MCF 10A (cell line): ENCODE measurements at regions of chr19 and their contacts with region 1.

Region 1: GRCh38 chr19:36214386-36215275 is at the starts of genes ZNF146 and ZNF565:
- DNase-seq: peak; percentile 99
- H3K4me3 Mint-ChIP-seq: no peak within 1 kb of the TSS
- H3K27ac Mint-ChIP-seq: no peak within 1 kb of the TSS
- H3K4me1 Mint-ChIP-seq: peaks cover 6% of the 10 kb centered on the region
- H3K27me3 Mint-ChIP-seq: no peaks in the 10 kb centered on the region
- CTCF ChIP-seq: no peak
- total RNA-seq, gene ZNF146: 102 and 132 TPM in 2 replicates
- total RNA-seq, gene ZNF565: 2.9 and 3.6 TPM in 2 replicates

Region 2: DNA sequence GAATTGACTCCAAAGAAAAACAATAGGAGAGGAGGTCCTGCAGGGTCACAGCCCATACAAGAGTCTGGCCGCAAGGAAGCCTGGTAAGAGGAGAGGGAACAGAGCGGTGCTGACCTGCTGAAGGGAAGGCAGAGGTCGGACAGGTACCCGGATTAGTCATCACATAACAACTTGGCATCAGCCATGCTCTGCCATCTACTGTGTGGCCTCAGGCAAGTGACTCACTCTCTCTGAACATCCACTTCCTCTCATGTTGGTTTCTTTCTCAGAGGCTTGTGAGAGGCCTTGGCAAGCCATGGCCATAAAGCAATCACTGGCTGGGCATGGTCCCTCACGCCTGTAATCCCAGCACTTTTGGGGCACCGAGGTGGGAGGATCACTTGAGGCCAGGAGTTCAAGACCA is 82.1 kb before region 1 on chr19:
- CTCF ChIA-PET with region 1: interaction called, 7 read pairs
- POLR2A ChIA-PET with region 1: interaction called, 21 read pairs
- intact Hi-C with region 1: no loop called
- DNase-seq: peak; percentile 100
- H3K4me3 Mint-ChIP-seq: no peak overlapping the region
- H3K27ac Mint-ChIP-seq: peak overlapping the region; percentile 71
- H3K4me1 Mint-ChIP-seq: peaks cover 34% of the 10 kb centered on the region
- H3K27me3 Mint-ChIP-seq: no peaks in the 10 kb centered on the region
- CTCF ChIP-seq: no peak

Region 3: GRCh38 chr19:36225219-36225892 is 10.7 kb after region 1 on chr19:
- CTCF ChIA-PET with region 1: interaction called, 6 read pairs
- POLR2A ChIA-PET with region 1: interaction called, 22 read pairs
- intact Hi-C with region 1: no loop called
- DNase-seq: no peak
- H3K4me3 Mint-ChIP-seq: no peak overlapping the region
- H3K27ac Mint-ChIP-seq: no peak overlapping the region
- H3K4me1 Mint-ChIP-seq: peaks cover 12% of the 10 kb centered on the region
- H3K27me3 Mint-ChIP-seq: no peaks in the 10 kb centered on the region
- CTCF ChIP-seq: no peak

Region 4: DNA sequence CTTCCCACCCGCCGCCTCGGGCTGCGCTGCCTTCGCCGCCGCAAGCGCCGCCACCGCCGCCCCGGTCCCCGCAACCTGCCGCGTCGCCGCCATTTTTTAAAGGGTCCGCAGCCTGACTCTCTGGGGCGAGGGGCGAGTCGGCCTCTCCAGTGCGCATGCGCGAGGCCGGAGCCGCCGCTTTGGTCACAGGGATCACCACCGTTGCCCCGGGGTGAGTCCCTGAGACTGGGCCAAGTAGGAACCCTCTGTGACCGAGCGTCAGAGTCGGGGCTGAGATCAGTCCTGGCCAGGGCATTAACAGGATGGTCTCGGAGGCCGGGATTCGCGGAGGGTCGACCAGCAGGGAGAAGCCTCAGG is 42.9 kb after region 1 on chr19:
- CTCF ChIA-PET with region 1: no interaction called
- POLR2A ChIA-PET with region 1: no interaction called
- intact Hi-C with region 1: no loop called
- DNase-seq: no peak
- H3K4me3 Mint-ChIP-seq: no peak overlapping the region
- H3K27ac Mint-ChIP-seq: no peak overlapping the region
- H3K4me1 Mint-ChIP-seq: no peaks in the 10 kb centered on the region
- H3K27me3 Mint-ChIP-seq: no peaks in the 10 kb centered on the region
- CTCF ChIP-seq: no peak

Region 5: DNA sequence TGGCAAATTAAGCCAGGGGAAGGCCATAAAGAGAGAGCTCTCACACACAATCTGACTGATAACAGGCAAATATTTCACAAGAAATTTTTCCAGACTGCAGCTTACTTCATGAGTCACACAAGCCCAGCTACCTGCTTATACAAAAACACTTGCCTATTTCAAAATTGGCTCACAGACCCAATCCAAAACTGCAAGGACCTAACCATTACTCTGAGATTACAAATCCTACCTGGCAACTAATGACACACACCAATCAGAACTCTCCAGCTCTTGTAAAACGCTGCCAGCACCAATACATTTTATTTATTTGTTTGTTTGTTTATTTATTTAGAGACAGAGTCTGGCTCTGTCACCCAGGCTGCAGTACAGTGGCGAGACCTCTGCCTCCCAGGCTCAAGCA is 221.9 kb after region 1 on chr19:
- CTCF ChIA-PET with region 1: no interaction called
- POLR2A ChIA-PET with region 1: no interaction called
- intact Hi-C with region 1: no loop called
- DNase-seq: peak; percentile 5
- H3K4me3 Mint-ChIP-seq: no peak overlapping the region
- H3K27ac Mint-ChIP-seq: no peak overlapping the region
- H3K4me1 Mint-ChIP-seq: no peaks in the 10 kb centered on the region
- H3K27me3 Mint-ChIP-seq: no peaks in the 10 kb centered on the region
- CTCF ChIP-seq: no peak

Region 6: GRCh38 chr19:36489118-36489919 is 274.7 kb after region 1 on chr19 and contains the start of gene ZNF566:
- CTCF ChIA-PET with region 1: no interaction called
- POLR2A ChIA-PET with region 1: interaction called, 20 read pairs
- intact Hi-C with region 1: no loop called
- DNase-seq: peak; percentile 96
- H3K4me3 Mint-ChIP-seq: peak within 1 kb of the TSS; percentile 98
- H3K27ac Mint-ChIP-seq: peak within 1 kb of the TSS; percentile 99
- H3K4me1 Mint-ChIP-seq: peaks cover 6% of the 10 kb centered on the region
- H3K27me3 Mint-ChIP-seq: no peaks in the 10 kb centered on the region
- CTCF ChIP-seq: no peak
- total RNA-seq, gene ZNF566: 3.9 and 6.6 TPM in 2 replicates

Region 7: DNA sequence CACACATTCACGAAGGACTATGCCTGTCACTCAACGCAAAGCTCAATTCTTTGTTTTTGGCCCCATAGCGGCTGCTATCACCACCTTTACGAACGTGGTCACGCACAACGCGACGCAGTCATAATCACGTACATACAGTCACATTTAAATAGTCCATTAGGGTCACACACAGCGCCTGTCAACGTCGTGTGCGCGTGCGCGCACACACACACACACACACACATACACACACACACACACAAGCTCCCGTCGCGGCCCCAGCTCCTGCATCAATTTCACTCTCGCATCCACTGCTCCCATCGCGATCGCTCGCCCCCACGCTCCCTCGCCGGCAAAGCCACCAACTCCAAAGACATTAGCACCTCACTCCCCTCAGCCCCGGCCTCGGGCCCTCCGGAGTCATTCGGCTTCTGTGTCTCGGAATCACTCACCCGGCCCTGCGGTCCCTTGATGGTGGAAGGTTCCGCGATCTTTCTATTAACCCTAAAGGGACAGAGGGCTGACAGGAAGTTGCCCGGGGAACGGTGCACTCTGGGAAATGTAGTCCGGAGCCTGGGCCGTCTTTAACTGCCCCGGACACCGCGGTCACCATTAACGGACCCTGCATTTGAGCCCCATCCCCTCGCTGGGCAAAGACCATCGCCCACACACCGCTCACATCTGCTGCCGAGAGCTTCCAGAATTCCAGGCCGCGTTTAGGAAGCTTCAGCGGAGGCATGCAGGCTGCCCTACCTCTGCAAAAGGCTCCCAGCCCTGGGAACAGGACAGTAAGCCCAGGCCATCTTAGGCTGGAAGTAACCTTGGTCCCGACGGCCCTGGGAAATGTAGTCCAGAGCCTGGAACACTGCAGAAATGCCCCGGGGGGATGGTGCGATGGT is 623.5 kb after region 1 on chr19 and contains the start of gene ZNF790:
- CTCF ChIA-PET with region 1: no interaction called
- POLR2A ChIA-PET with region 1: interaction called, 11 read pairs
- intact Hi-C with region 1: no loop called
- DNase-seq: peak; percentile 79
- H3K4me3 Mint-ChIP-seq: no peak within 1 kb of the TSS
- H3K27ac Mint-ChIP-seq: no peak within 1 kb of the TSS
- H3K4me1 Mint-ChIP-seq: no peaks in the 10 kb centered on the region
- H3K27me3 Mint-ChIP-seq: no peaks in the 10 kb centered on the region
- CTCF ChIP-seq: no peak
- total RNA-seq, gene ZNF790: 8.2 and 8.7 TPM in 2 replicates